Stomach (tissue), 19 donors: ENCODE measurements at regions of chr17 and their contacts with region 1.

Region 1: DNA sequence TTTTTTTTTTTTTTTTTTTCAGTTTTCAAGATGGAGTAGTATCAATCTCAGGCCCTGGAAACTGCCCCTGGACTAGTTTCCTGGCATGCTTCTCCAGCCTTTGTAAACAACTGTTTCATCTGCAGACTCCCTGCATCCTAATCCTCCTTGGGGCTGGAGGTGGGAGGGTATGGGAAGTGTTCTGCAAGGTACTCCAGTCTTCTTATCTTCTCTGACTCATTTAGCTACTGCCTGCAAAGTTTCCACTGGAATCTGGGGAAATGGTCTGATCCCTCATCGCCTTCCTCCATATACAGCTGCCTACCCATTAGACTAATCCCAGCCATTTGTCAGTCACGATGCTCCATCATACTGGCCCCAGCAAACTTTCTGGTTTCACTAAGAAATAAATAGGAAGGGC is 21.5 kb downstream of the COPZ2 start:
- DNase-seq: peak in 1 of 2 donors; percentile 49
- H3K4me3 ChIP-seq: no peak overlapping the region
- H3K27ac ChIP-seq: no peak overlapping the region
- H3K4me1 ChIP-seq: peaks cover 14 to 35% (median 15%) of the 10 kb centered on the region in 4 donors
- H3K27me3 ChIP-seq: peaks cover 5 to 48% (median 22%) of the 10 kb centered on the region in 3 donors
- CTCF ChIP-seq: no peak
- EP300 ChIP-seq: no peak
- POLR2A ChIP-seq: no peak

Region 2: GRCh38 chr17:47978324-47978723 is 37.8 kb before region 1 on chr17:
- intact Hi-C with region 1: loop called (anchors 5 kb)
- DNase-seq: peak; percentile 61 to 88
- H3K4me3 ChIP-seq: no peak overlapping the region
- H3K27ac ChIP-seq: no peak overlapping the region
- H3K4me1 ChIP-seq: peaks cover 0 to 23% (median 11%) of the 10 kb centered on the region in 4 donors
- H3K27me3 ChIP-seq: no peaks in the 10 kb centered on the region
- CTCF ChIP-seq: peak in 5 of 7 experiments; percentile 50 to 66 (median 53)
- EP300 ChIP-seq: no peak
- POLR2A ChIP-seq: no peak

Region 3: DNA sequence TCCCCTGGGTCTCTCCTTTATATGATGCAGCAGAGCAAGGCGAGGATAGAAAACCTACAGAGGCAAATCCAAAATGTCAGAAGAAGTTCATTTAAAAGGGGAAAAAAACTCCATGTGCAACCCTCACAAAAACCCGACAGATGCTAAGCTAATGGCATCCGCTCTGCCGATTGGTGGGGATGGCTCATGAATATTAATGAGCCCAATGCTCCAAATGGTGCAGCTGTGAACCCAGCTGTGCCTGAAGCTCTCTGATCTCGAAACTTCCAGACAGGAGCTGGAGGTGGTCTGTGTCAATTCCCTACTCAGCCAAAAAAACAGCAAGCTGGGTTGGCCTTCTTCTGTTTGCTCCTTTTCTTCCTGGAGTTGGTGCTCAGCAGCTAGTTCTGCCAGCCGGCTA is 107.0 kb after region 1 on chr17:
- intact Hi-C with region 1: no loop called
- DNase-seq: no peak
- H3K4me3 ChIP-seq: no peak overlapping the region
- H3K27ac ChIP-seq: no peak overlapping the region
- H3K4me1 ChIP-seq: no peaks in the 10 kb centered on the region
- H3K27me3 ChIP-seq: no peaks in the 10 kb centered on the region
- CTCF ChIP-seq: no peak
- EP300 ChIP-seq: no peak
- POLR2A ChIP-seq: no peak